Right cardiac atrium (tissue), 5 donors: ENCODE measurements at regions of chr2 and their contacts with region 1.

Region 1: DNA sequence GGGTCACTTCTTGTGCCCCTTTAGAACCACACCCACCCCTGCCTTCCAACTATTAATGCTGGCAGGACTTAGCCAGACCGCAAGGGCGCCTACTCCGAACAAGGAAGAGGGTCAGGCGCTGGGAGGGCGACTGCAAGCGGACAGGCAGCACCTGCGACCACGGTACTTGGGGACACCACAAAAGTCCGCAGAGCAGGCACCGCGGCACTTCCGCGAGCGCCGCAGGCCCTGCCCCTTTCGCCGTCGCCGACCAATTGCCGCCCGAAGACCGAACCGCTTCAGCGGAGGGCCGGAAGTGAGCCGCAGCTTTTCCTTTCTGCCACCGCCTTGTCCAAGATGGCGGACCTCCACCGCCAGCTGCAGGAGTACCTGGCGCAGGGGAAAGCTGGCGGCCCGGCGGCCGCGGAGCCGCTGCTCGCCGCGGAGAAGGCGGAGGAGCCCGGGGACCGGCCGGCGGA is at the start of gene SFT2D3:
- DNase-seq: peak; percentile 93 to 96 (median 96)
- ATAC-seq: peak; percentile 89 to 92
- H3K4me3 ChIP-seq: peak within 1 kb of the TSS; percentile 70
- H3K27ac ChIP-seq: peak within 1 kb of the TSS; percentile 78
- H3K4me1 ChIP-seq: peaks cover 12% of the 10 kb centered on the region
- H3K27me3 ChIP-seq: no peaks in the 10 kb centered on the region
- total RNA-seq, gene SFT2D3: 3.6 to 5.0 (median 4.4) TPM

Region 2: GRCh38 chr2:127526149-127527000 is 174.8 kb before region 1 on chr2 and contains the start of gene IWS1:
- intact Hi-C with region 1: loop called in 2 of 4 experiments (anchors 5 kb)
- DNase-seq: peak; percentile 96 to 98 (median 98)
- ATAC-seq: peak; percentile 97 to 98
- H3K4me3 ChIP-seq: peak within 1 kb of the TSS; percentile 72
- H3K27ac ChIP-seq: peak within 1 kb of the TSS; percentile 73
- H3K4me1 ChIP-seq: peaks cover 2% of the 10 kb centered on the region
- H3K27me3 ChIP-seq: no peaks in the 10 kb centered on the region
- total RNA-seq, gene IWS1: 51.5 to 57.6 (median 53.4) TPM